HCT116 (cell line): ENCODE measurements at regions of chr2 and their contacts with region 1.

Region 1: DNA sequence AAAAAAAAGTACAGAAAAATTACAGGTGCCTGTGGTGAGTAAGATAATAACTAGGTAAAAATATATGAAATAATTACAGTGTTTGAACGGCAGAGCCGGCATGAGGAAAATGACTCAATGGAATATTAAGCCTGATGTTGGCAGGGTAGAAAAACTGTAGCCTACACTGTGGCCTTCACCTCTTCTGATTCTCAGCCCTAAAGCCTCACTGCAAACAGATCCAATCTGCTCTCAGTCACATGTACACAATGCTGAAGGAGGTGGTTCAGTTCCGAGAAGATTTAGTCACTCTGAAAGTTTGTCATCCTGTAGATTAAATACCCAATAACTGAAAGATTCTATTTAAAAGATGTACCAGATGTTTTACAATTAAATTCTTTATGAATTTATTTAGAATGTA is 66.9 kb upstream of the MAP3K20 start:
- DNase-seq: no peak
- ATAC-seq: no peak
- H3K4me3 ChIP-seq: no peak overlapping the region
- H3K27ac ChIP-seq: no peak overlapping the region
- H3K4me1 ChIP-seq: no peaks in the 10 kb centered on the region
- H3K27me3 ChIP-seq: no peaks in the 10 kb centered on the region
- CTCF ChIP-seq: no peak
- POLR2A ChIP-seq: no peak
- RAD21 ChIP-seq: no peak

Region 2: GRCh38 chr2:172972005-172972619 is 36.7 kb before region 1 on chr2:
- CTCF ChIA-PET with region 1: no interaction called
- POLR2A ChIA-PET with region 1: no interaction called
- RAD21 ChIA-PET with region 1: no interaction called
- intact Hi-C with region 1: loop called (anchors 1 kb)
- DNase-seq: peak; percentile 36
- ATAC-seq: peak; percentile 99
- H3K4me3 ChIP-seq: no peak overlapping the region
- H3K27ac ChIP-seq: no peak overlapping the region
- H3K4me1 ChIP-seq: peaks cover 0 to 6% of the 10 kb centered on the region in 2 experiments; a peak in 2 of 4 replicates
- H3K27me3 ChIP-seq: no peaks in the 10 kb centered on the region
- CTCF ChIP-seq: peak; percentile 54 to 97 (median 88); a peak in 5 of 6 replicates
- POLR2A ChIP-seq: no peak
- RAD21 ChIP-seq: peak; percentile 67